GM12878 (cell line): ENCODE measurements at regions of chr12 and their contacts with region 1.

Region 1: GRCh38 chr12:77746096-77746495 is 84.6 kb upstream of the NAV3 start:
- DNase-seq: peak; percentile 83
- ATAC-seq: peak; percentile 96
- H3K4me3 ChIP-seq: no peak overlapping the region
- H3K27ac ChIP-seq: no peak overlapping the region; the same call in 1 of the 2 replicates
- H3K4me1 ChIP-seq: peaks cover 10% of the 10 kb centered on the region
- H3K27me3 ChIP-seq: no peaks in the 10 kb centered on the region
- CTCF ChIP-seq: no peak
- EP300 ChIP-seq: peak; percentile 65 to 87; a peak in 3 of 4 replicates
- POLR2A ChIP-seq: no peak
- RAD21 ChIP-seq: no peak

Region 2: GRCh38 chr12:77847060-77847541 is 101.0 kb after region 1 on chr12:
- CTCF ChIA-PET with region 1: no interaction called
- POLR2A ChIA-PET with region 1: no interaction called
- RAD21 ChIA-PET with region 1: interaction called, 4 read pairs
- SMC1A ChIA-PET with region 1: interaction called, 4 read pairs
- in situ Hi-C with region 1: no loop called
- intact Hi-C with region 1: loop called (anchors 2 kb)
- DNase-seq: peak; percentile 75
- ATAC-seq: peak; percentile 99
- H3K4me3 ChIP-seq: no peak overlapping the region
- H3K27ac ChIP-seq: peak overlapping the region; percentile 82
- H3K4me1 ChIP-seq: peaks cover 21% of the 10 kb centered on the region
- H3K27me3 ChIP-seq: no peaks in the 10 kb centered on the region
- CTCF ChIP-seq: no peak
- EP300 ChIP-seq: peak; percentile 66 to 78
- POLR2A ChIP-seq: no peak
- RAD21 ChIP-seq: no peak

Region 3: DNA sequence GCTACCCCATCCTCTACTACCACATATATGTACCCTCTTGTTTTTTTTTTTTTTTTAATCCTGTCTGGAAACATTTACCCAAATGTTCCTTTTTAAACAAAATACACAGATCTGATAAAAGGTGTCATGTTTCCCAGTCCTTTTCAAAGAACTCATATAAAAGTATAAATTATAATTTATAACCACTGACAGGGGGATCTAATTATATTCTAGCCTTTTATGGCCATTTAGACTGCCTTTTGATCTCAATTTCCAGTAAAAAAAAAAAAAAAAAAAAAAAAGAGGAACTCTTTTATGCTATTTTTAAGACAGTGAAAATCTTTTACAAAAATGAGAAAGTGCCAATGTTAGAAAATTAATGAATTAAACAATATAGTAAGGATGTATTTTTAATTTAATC is 149.6 kb after region 1 on chr12:
- CTCF ChIA-PET with region 1: no interaction called
- POLR2A ChIA-PET with region 1: no interaction called
- RAD21 ChIA-PET with region 1: no interaction called
- SMC1A ChIA-PET with region 1: no interaction called
- in situ Hi-C with region 1: no loop called
- intact Hi-C with region 1: no loop called
- DNase-seq: no peak
- ATAC-seq: no peak
- H3K4me3 ChIP-seq: no peak overlapping the region
- H3K27ac ChIP-seq: no peak overlapping the region
- H3K4me1 ChIP-seq: no peaks in the 10 kb centered on the region
- H3K27me3 ChIP-seq: no peaks in the 10 kb centered on the region
- CTCF ChIP-seq: no peak
- EP300 ChIP-seq: no peak
- POLR2A ChIP-seq: no peak
- RAD21 ChIP-seq: no peak

Region 4: GRCh38 chr12:77995436-77996167 is 249.5 kb after region 1 on chr12:
- CTCF ChIA-PET with region 1: no interaction called
- POLR2A ChIA-PET with region 1: no interaction called
- RAD21 ChIA-PET with region 1: no interaction called
- SMC1A ChIA-PET with region 1: no interaction called
- in situ Hi-C with region 1: no loop called
- intact Hi-C with region 1: loop called (anchors 5 kb)
- DNase-seq: peak; percentile 32
- ATAC-seq: peak; percentile 86
- H3K4me3 ChIP-seq: no peak overlapping the region
- H3K27ac ChIP-seq: no peak overlapping the region
- H3K4me1 ChIP-seq: peaks cover 4% of the 10 kb centered on the region
- H3K27me3 ChIP-seq: no peaks in the 10 kb centered on the region
- CTCF ChIP-seq: no peak
- EP300 ChIP-seq: peak; percentile 58 to 87; a peak in 2 of 4 replicates
- POLR2A ChIP-seq: no peak
- RAD21 ChIP-seq: no peak

Region 5: DNA sequence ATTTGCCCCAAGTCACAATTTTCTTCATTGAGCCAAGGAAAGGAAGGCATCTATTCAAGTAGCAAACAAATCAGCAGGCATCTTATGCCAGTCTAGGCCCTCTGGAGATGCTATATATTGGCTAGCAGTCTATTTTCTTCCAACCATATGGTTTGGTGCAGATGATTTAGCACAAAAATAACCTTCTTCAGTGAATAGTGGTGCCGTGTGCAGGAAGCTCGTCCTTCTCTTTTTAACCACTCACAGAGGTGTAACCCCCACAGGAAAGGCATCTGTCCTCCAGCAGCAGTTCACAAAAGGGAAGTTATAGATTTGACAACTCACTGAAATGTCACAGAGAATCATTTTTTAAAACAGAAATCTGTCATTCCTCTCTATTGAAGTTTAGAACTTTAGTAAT is 672.8 kb after region 1 on chr12:
- CTCF ChIA-PET with region 1: no interaction called
- POLR2A ChIA-PET with region 1: no interaction called
- RAD21 ChIA-PET with region 1: no interaction called
- SMC1A ChIA-PET with region 1: no interaction called
- in situ Hi-C with region 1: no loop called
- intact Hi-C with region 1: no loop called
- DNase-seq: no peak
- ATAC-seq: peak; percentile 29; the same call in 2 of the 3 replicates
- H3K4me3 ChIP-seq: no peak overlapping the region
- H3K27ac ChIP-seq: no peak overlapping the region
- H3K4me1 ChIP-seq: no peaks in the 10 kb centered on the region
- H3K27me3 ChIP-seq: no peaks in the 10 kb centered on the region
- CTCF ChIP-seq: no peak
- EP300 ChIP-seq: no peak
- POLR2A ChIP-seq: no peak
- RAD21 ChIP-seq: no peak